Activated T-helper 1 cell treated with anti-CD3 and anti-CD28 coated beads, Interleukin-12 subunit alpha, Interleukin-12 subunit beta, Interleukin-2, Interleukin-4 antibody, amounts not matched to agents 30 ng/mL and 10 ng/mL and 1 ng/mL, durations not matched to agents 14 hours and 24 hours and 36 hours (primary cell): ENCODE measurements at regions of chr10 and their contacts with region 1.

Region 1: GRCh38 chr10:118046395-118047156 is at the start of gene RAB11FIP2:
- DNase-seq: peak; percentile 91
- H3K4me3 Mint-ChIP-seq: peak within 1 kb of the TSS; percentile 92
- H3K27ac Mint-ChIP-seq: peak within 1 kb of the TSS; percentile 83
- H3K4me1 Mint-ChIP-seq: peaks cover 30% of the 10 kb centered on the region
- H3K27me3 Mint-ChIP-seq: peaks cover 13% of the 10 kb centered on the region
- total RNA-seq, gene RAB11FIP2: 13.0 and 13.1 TPM in 2 replicates

Region 2: GRCh38 chr10:118035354-118036005 is 11.1 kb before region 1 on chr10:
- intact Hi-C with region 1: loop called (anchors 1 kb)
- DNase-seq: no peak
- H3K4me3 Mint-ChIP-seq: no peak overlapping the region
- H3K27ac Mint-ChIP-seq: no peak overlapping the region
- H3K4me1 Mint-ChIP-seq: peaks cover 26% of the 10 kb centered on the region
- H3K27me3 Mint-ChIP-seq: no peaks in the 10 kb centered on the region

Region 3: GRCh38 chr10:118341791-118342637 is 295.4 kb after region 1 on chr10 and contains the start of gene FAM204A:
- intact Hi-C with region 1: loop called (anchors 1 kb)
- DNase-seq: peak; percentile 94
- H3K4me3 Mint-ChIP-seq: peak within 1 kb of the TSS; percentile 92
- H3K27ac Mint-ChIP-seq: peak within 1 kb of the TSS; percentile 92
- H3K4me1 Mint-ChIP-seq: peaks cover 32% of the 10 kb centered on the region
- H3K27me3 Mint-ChIP-seq: peaks cover 6% of the 10 kb centered on the region
- total RNA-seq, gene FAM204A: 61.8 and 63.3 TPM in 2 replicates